CD4-positive, alpha-beta T cell (primary cell): ENCODE measurements at regions of chr17 and their contacts with region 1.

Region 1: GRCh38 chr17:50841949-50842354 is 6.6 kb downstream of the WFIKKN2 start:
- DNase-seq: peak; percentile 23 to 72 (median 40)
- ATAC-seq: peak; percentile 62
- H3K4me3 ChIP-seq: no peak overlapping the region
- H3K4me3 Mint-ChIP-seq: no peak overlapping the region
- H3K27ac ChIP-seq: no peak overlapping the region
- H3K27ac Mint-ChIP-seq: no peak overlapping the region
- H3K4me1 ChIP-seq: peaks cover 5% of the 10 kb centered on the region
- H3K4me1 Mint-ChIP-seq: no peaks in the 10 kb centered on the region
- H3K27me3 ChIP-seq: no peaks in the 10 kb centered on the region
- H3K27me3 Mint-ChIP-seq: no peaks in the 10 kb centered on the region
- CTCF ChIP-seq: peak; percentile 62

Region 2: DNA sequence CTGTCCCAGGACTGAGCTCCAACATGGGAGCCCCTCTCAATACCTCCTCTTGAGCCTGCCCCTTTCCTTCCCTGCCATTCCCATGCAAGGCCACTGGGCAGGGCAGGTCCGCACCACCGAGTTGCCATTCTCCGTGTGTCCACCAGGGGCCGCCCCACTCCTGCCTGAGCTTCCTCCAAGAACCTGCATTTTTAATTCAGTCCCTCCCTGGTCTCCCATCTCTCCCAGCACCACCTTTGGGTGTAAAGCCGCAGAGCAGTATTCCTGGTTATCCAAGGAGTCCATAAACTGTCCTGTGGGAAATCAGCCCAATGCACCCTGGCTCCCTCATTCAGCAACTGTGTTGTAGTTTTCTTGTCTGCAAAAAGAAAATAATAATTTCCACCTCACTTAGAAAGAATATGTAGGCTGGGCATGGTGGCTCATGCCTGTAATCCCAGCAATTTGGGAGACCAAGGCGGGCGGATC is 58.7 kb before region 1 on chr17:
- CTCF ChIA-PET with region 1: no interaction called
- POLR2A ChIA-PET with region 1: interaction called, 4 read pairs
- intact Hi-C with region 1: loop called (anchors 1 kb)
- DNase-seq: peak; percentile 64 to 87 (median 73)
- ATAC-seq: peak; percentile 65
- H3K4me3 ChIP-seq: no peak overlapping the region
- H3K4me3 Mint-ChIP-seq: peak overlapping the region; percentile 48
- H3K27ac ChIP-seq: no peak overlapping the region
- H3K27ac Mint-ChIP-seq: no peak overlapping the region
- H3K4me1 ChIP-seq: peaks cover 36% of the 10 kb centered on the region
- H3K4me1 Mint-ChIP-seq: peaks cover 35% of the 10 kb centered on the region
- H3K27me3 ChIP-seq: no peaks in the 10 kb centered on the region
- H3K27me3 Mint-ChIP-seq: peaks cover 5% of the 10 kb centered on the region
- CTCF ChIP-seq: peak; percentile 95

Region 3: DNA sequence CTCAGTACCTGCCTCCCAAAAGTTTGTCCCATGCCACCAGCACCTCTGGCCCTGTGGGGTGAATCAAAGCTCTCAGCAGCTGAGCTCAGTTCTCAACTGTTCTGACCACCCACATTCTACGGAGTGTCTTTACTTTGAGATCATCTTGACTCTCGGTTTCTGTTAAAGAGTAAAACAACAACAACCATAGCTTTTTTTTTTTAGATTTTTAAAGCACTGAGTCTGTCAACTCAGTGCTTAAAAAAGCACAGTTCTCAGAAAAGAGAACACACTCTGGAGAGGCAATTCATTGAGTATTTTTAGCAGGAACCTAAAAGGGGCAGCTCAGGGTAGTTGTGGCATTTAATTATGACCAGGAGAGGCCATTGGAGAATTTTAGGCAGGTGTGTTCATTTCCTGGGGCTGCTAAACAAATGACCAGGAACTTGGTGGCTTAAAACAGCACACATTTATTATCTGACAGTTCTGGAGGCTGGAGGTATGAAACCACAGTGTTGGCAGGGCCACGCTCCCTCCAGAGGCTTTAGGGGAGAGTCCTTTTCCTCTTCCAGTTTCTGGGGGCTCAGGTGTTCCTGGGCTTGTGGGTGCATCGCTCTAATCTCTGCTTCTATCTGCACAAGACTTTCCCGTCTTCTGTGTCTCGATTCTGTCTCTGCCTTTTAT is 13.3 kb before region 1 on chr17:
- CTCF ChIA-PET with region 1: no interaction called
- POLR2A ChIA-PET with region 1: no interaction called
- intact Hi-C with region 1: no loop called
- DNase-seq: no peak
- ATAC-seq: no peak
- H3K4me3 ChIP-seq: no peak overlapping the region
- H3K4me3 Mint-ChIP-seq: no peak overlapping the region
- H3K27ac ChIP-seq: no peak overlapping the region
- H3K27ac Mint-ChIP-seq: no peak overlapping the region
- H3K4me1 ChIP-seq: no peaks in the 10 kb centered on the region
- H3K4me1 Mint-ChIP-seq: no peaks in the 10 kb centered on the region
- H3K27me3 ChIP-seq: peaks cover 1 to 4% of the 10 kb centered on the region in 2 experiments
- H3K27me3 Mint-ChIP-seq: peaks cover 8% of the 10 kb centered on the region
- CTCF ChIP-seq: no peak